ENCODE measurements at regions of chr1 and their contacts with region 1.

Region 1: DNA sequence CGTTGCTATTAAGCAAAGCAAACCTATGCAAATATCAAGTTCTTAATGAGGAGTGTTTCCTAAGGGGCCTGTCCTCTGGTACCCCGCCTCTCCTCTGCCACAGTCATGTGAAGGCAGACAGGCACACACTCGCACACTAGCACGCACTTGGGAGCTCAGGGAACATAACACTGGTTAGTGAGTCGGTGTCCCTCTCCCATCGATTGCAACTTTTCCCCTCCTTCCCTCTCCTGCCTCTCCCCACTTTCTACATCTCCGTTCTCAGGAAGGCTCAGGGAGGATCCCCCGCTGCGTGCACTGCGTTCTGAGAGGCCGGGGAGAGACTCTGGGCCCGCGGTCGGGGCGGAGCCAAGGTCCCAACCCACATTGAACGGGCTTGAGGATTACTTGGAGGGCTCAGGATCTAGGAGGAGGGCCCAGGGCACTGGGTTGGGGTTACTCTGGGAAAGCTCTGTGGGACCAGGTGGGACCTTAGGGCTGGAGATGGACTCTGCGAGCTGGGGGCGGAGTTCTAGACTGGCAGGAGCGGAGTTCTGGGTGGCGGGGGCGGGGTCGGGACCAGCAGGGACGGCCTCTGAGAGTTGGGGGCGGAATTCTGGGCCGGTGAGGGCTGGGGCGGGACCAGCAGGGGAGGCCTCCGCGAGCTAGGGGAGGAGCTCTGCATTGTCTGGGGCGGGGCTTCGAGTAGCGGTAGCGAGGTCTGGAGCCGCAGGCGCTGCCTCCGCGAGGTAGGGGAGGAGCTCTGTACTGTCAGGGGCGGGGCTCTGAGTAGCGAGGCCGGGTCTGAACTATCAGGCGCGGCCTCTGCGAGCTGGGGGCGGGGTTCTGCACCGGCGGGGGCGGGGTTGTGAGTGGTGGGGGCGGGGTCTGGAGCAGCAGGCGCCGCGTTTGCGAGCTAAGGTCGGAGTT is 533 bp upstream of the LEPR start:
- ATAC-seq: peak; percentile 81 to 92 (median 89)
- H3K4me3 ChIP-seq: peak overlapping the region; percentile 59 to 89 (median 82)
- H3K27ac ChIP-seq: peak overlapping the region; percentile 75 to 93
- H3K4me1 ChIP-seq: peaks cover 3 to 8% of the 10 kb centered on the region in 2 donors

Region 2: GRCh38 chr1:64940025-64940424 is 479.9 kb before region 1 on chr1:
- in situ Hi-C with region 1: no loop called
- ATAC-seq: peak in 2 of 8 experiments; percentile 22 to 26
- H3K4me3 ChIP-seq: no peak overlapping the region
- H3K27ac ChIP-seq: no peak overlapping the region
- H3K4me1 ChIP-seq: peaks cover 0 to 4% of the 10 kb centered on the region in 2 donors

Region 3: DNA sequence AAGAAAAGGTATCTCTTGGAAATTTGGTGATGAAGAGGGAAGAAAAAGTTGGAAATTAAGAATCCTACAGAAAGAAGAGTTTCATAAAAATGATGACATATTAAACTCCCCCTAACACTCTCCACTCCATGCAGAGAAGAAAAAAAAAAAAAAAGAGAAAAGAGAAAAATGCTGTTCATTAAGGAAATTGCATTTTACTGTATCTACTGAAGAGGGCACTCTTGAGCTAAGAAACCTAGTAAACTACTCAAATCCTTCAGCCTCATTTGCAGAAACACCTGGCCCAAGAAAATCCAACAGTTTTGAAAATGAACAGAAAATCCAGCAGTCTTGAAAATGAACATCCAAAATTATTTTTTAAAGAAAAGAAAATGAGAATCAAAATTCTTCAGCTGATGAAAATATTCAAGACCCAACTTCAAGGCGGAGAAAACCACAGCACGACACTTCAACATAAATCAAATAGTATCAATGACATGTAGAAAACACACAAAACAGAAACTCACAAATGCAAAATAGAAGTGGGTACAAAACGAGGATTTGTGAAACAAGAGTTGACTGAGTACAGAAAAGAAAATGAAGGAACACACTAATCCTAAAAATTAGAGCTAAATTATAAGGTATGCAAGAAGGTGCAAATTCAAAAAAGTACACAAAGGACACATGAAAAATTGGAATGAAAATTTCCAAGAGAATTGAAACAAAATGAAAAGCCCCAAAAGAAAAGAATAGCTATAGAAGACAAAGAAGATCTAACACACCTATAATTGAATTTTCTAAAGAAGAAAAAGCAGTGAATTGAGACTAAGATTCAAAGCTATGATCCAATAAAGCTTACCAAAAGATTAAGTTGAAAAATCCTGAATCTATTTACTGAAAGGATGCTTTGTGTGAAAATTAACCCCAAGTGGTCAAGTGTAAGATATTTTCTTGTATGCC is 183.8 kb before region 1 on chr1:
- in situ Hi-C with region 1: loop called in 2 of 9 experiments (anchors 10 kb)
- ATAC-seq: peak in 2 of 8 experiments; percentile 29 to 38
- H3K4me3 ChIP-seq: no peak overlapping the region
- H3K27ac ChIP-seq: no peak overlapping the region
- H3K4me1 ChIP-seq: peaks cover 0 to 4% of the 10 kb centered on the region in 2 donors

Region 4: GRCh38 chr1:65247513-65248359 is 172.2 kb before region 1 on chr1:
- in situ Hi-C with region 1: loop called in 1 of 9 experiments (anchors 10 kb)
- ATAC-seq: peak; percentile 36 to 99 (median 84)
- H3K4me3 ChIP-seq: no peak overlapping the region
- H3K27ac ChIP-seq: no peak overlapping the region
- H3K4me1 ChIP-seq: peaks cover 0 to 8% of the 10 kb centered on the region in 2 donors